ENCODE measurements at regions of chr15 and their contacts with region 1.

Region 1: GRCh38 chr15:47374222-47374621 is 343.1 kb upstream of the SEMA6D start:
- DNase-seq: no peak
- H3K4me3 ChIP-seq: no peak overlapping the region
- H3K27ac ChIP-seq: no peak overlapping the region
- H3K27me3 ChIP-seq: no peaks in the 10 kb centered on the region
- CTCF ChIP-seq: peak; percentile 62

Region 2: DNA sequence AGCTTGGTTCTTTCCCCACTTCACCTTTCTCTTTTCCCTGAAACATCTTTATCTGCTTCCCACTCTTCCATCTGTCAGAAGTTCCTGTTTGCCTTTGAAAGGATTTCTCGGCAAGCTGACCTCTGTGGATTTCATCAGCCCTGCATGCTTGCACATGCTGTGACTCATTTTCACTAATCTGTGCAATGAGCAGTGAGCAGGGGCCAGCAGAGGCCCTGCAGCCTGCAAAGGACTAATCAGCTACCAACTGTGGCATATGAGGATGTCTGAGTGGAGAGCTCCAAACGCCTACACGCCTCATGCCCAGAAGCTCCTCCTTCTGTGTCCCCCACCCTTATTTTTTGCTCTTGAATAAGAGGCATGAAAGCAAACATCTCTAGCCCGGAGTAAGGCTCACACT is 10.1 kb after region 1 on chr15:
- CTCF ChIA-PET with region 1: interaction called, 28 read pairs
- POLR2A ChIA-PET with region 1: no interaction called
- DNase-seq: peak; percentile 77
- H3K4me3 ChIP-seq: no peak overlapping the region
- H3K27ac ChIP-seq: peak overlapping the region; percentile 80
- H3K27me3 ChIP-seq: no peaks in the 10 kb centered on the region
- CTCF ChIP-seq: no peak

Region 3: GRCh38 chr15:47570881-47571640 is 196.8 kb after region 1 on chr15:
- CTCF ChIA-PET with region 1: no interaction called
- POLR2A ChIA-PET with region 1: no interaction called
- DNase-seq: no peak
- H3K4me3 ChIP-seq: no peak overlapping the region
- H3K27ac ChIP-seq: no peak overlapping the region
- H3K27me3 ChIP-seq: no peaks in the 10 kb centered on the region
- CTCF ChIP-seq: no peak